ENCODE measurements at regions of chr10 and their contacts with region 1.

Region 1: DNA sequence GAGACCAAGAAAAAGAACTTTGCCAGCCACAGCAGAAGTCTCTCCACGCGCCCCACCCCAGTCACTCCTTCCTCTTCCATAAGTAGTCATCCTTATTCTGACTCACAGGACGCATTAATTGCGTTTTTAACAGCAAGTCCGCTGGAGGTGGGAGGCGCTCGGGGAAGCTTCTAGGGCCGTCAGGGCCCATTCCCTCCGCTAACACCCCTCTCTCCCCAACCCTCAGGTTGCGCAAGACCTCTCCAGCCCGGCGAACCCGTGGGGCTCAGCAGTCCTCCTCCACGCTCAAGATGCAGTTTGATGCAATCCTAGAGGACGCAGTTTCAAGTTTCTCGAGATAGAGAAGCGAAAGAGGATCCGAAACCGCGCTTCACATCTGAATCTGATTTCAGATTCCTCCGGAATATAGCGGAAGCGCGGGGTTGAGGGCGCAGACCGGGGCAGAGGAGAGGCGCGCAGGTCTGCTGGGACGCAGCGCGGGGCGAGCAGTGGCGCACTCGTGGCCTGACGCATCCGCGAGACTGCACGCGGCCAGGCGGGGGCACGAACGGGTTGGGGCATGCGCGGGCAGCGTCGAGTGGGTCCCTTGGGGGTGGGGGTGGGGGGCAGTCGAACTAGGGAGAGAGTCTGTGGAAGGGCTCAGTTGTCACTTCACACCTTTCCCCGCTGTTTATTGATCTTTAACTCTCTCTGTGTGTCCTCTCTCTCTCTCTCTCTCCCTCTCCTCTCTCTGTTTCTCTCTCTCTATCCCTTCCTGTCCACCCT is 37.8 kb upstream of the PSAP start:
- DNase-seq: peak; percentile 82
- ATAC-seq: peak; percentile 94
- H3K4me3 Mint-ChIP-seq: peak overlapping the region; percentile 87
- H3K27ac Mint-ChIP-seq: peak overlapping the region; percentile 92
- H3K4me1 Mint-ChIP-seq: peaks cover 39% of the 10 kb centered on the region
- H3K27me3 Mint-ChIP-seq: no peaks in the 10 kb centered on the region
- CTCF ChIP-seq: no peak

Region 2: GRCh38 chr10:71378336-71379117 is 510.3 kb before region 1 on chr10:
- CTCF ChIA-PET with region 1: no interaction called
- POLR2A ChIA-PET with region 1: no interaction called
- intact Hi-C with region 1: loop called (anchors 5 kb)
- DNase-seq: no peak
- ATAC-seq: peak; percentile 20
- H3K4me3 Mint-ChIP-seq: peak overlapping the region; percentile 24
- H3K27ac Mint-ChIP-seq: peak overlapping the region; percentile 67
- H3K4me1 Mint-ChIP-seq: peaks cover 40% of the 10 kb centered on the region
- H3K27me3 Mint-ChIP-seq: no peaks in the 10 kb centered on the region
- CTCF ChIP-seq: no peak

Region 3: GRCh38 chr10:71696628-71697326 is 192.0 kb before region 1 on chr10:
- CTCF ChIA-PET with region 1: no interaction called
- POLR2A ChIA-PET with region 1: no interaction called
- intact Hi-C with region 1: loop called (anchors 2 kb)
- DNase-seq: peak; percentile 59
- ATAC-seq: no peak
- H3K4me3 Mint-ChIP-seq: no peak overlapping the region
- H3K27ac Mint-ChIP-seq: no peak overlapping the region
- H3K4me1 Mint-ChIP-seq: peaks cover 63% of the 10 kb centered on the region
- H3K27me3 Mint-ChIP-seq: no peaks in the 10 kb centered on the region
- CTCF ChIP-seq: peak; percentile 27

Region 4: DNA sequence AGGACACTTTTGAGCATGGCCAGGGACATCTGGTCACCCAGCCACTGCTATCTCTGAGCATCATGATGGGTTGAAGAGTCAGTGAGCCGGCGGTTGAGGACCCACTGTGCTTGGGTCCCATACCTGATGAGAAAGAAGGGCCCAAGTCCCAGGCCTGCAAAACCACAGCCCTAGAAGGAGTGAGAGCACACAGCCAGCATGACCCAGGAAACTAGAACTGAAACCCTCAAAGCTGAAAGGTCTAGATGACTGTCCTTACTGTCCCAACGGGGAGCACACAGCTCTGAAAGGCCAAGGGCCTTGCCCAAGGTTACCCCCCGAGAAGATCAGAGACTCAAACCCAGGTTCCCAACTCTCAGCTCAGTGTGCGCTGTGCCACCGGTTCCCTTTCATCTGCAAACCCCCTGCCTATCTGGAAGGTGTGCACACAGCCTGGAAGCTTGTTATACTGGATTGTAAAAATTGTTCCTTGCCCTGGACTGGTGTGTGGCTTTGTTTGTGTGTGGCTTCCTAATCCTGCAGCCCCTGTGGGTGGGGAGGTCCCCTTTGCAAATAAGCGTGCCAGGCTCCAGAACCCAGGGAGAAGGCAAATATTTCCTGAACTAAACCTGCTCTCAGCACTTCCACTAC is 15.1 kb before region 1 on chr10:
- CTCF ChIA-PET with region 1: interaction called, 8 read pairs
- POLR2A ChIA-PET with region 1: interaction called, 7 read pairs
- intact Hi-C with region 1: loop called (anchors 1 kb)
- DNase-seq: no peak
- ATAC-seq: peak; percentile 78
- H3K4me3 Mint-ChIP-seq: peak overlapping the region; percentile 58
- H3K27ac Mint-ChIP-seq: peak overlapping the region; percentile 61
- H3K4me1 Mint-ChIP-seq: peaks cover 46% of the 10 kb centered on the region
- H3K27me3 Mint-ChIP-seq: no peaks in the 10 kb centered on the region
- CTCF ChIP-seq: no peak

Region 5: GRCh38 chr10:71999360-72000072 is 110.7 kb after region 1 on chr10:
- CTCF ChIA-PET with region 1: no interaction called
- POLR2A ChIA-PET with region 1: no interaction called
- intact Hi-C with region 1: no loop called
- DNase-seq: no peak
- ATAC-seq: peak; percentile 56
- H3K4me3 Mint-ChIP-seq: no peak overlapping the region
- H3K27ac Mint-ChIP-seq: no peak overlapping the region
- H3K4me1 Mint-ChIP-seq: peaks cover 21% of the 10 kb centered on the region
- H3K27me3 Mint-ChIP-seq: peaks cover 2% of the 10 kb centered on the region
- CTCF ChIP-seq: no peak

Measured in activated B cell treated with CpG ODN at 0.5 μM for 24 hours (primary cell).